ENCODE measurements at regions of chr1 and their contacts with region 1.

Region 1: GRCh38 chr1:109906160-109906838 is 4.3 kb upstream of the CSF1 start:
- DNase-seq: peak; percentile 74
- H3K4me3 Mint-ChIP-seq: peak overlapping the region; percentile 58
- H3K27ac Mint-ChIP-seq: peak overlapping the region; percentile 93
- H3K4me1 Mint-ChIP-seq: peaks cover 52% of the 10 kb centered on the region
- H3K27me3 Mint-ChIP-seq: peaks cover 47% of the 10 kb centered on the region

Region 2: GRCh38 chr1:109790735-109791494 is 115.4 kb before region 1 on chr1:
- CTCF ChIA-PET with region 1: interaction called, 16 read pairs
- DNase-seq: peak; percentile 88
- H3K4me3 Mint-ChIP-seq: no peak overlapping the region
- H3K27ac Mint-ChIP-seq: peak overlapping the region; percentile 91
- H3K4me1 Mint-ChIP-seq: peaks cover 77% of the 10 kb centered on the region
- H3K27me3 Mint-ChIP-seq: peaks cover 3% of the 10 kb centered on the region

Region 3: DNA sequence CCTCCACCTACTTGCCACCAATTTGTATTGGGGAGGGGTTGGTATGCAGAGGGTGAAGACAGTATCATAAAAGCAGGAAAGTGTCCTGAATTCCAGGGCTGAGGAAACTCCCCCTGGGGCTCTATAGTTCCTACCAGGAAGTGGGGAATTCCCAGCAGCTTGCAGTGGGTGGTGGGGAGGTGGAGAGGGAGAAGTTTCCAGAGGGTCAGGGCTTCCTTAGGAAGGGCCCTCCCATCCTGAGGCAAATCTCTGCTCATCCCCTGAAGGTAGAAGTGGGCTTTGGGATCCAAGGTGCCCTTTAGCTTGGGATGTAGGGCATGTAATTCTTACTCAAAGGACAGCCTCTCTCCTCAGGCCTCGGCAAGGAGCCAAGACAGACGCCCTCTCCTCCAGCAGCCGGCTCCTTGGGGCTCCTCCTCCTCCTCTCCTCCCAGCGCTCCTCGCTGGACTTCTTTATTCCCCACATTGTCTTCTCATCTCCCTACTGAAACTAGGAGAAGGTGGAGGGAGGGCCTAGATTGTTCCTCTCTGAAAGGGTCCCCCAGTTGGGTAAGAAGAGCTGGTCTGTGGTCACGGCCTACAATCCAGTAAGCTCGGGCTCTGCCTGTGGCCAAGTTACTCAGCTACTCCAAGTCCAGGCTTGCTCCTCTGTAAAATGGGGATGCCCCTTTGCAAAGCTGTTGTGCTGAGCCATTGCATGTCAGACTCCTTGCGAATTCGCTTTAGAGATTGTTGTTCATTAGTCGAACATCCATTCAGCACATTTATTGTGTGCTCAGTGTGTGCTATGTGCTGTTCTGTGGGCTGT is 13.5 kb before region 1 on chr1:
- CTCF ChIA-PET with region 1: interaction called, 11 read pairs
- DNase-seq: no peak
- H3K4me3 Mint-ChIP-seq: no peak overlapping the region
- H3K27ac Mint-ChIP-seq: no peak overlapping the region
- H3K4me1 Mint-ChIP-seq: no peaks in the 10 kb centered on the region
- H3K27me3 Mint-ChIP-seq: peaks cover 18% of the 10 kb centered on the region

Measured in activated naive CD4-positive, alpha-beta T cell treated with anti-CD3 and anti-CD28 coated beads, Interleukin-2, amount 10 ng/mL, durations not matched to agents 7 days and 5 days (primary cell).